ENCODE measurements at regions of chr7 and their contacts with region 1.

Region 1: DNA sequence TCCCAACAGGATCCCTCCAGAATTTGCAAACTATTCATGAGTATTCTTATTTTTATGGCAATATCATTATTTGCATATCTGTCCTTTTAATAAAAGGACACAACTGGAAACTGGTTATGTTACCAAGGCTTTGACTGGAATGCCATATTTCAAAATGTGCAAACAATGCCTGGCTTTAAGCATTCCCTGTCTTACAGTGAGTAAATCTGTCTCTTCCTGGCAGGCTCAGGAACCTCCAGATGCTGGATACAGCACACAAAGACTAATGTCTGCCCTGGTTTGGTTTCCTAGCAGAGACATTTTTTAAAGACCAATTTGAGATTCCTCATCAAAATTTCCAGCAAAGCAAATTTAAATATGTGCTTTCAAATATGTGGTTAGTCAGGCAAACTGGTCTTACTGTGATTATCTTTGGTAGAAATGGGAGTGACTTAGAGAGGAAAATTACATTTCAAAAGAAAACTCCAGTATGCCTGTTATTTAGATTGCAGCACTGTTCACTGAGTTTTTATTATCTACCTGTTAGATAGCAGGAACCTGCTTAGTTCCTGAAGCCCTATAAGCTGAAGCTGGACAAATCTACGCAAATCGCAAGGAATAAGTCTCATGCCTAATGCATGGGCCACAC is 31.3 kb downstream of the RNF216 start:
- DNase-seq: no peak
- H3K4me3 Mint-ChIP-seq: no peak overlapping the region
- H3K27ac Mint-ChIP-seq: no peak overlapping the region
- H3K4me1 Mint-ChIP-seq: no peaks in the 10 kb centered on the region
- H3K27me3 Mint-ChIP-seq: no peaks in the 10 kb centered on the region

Region 2: DNA sequence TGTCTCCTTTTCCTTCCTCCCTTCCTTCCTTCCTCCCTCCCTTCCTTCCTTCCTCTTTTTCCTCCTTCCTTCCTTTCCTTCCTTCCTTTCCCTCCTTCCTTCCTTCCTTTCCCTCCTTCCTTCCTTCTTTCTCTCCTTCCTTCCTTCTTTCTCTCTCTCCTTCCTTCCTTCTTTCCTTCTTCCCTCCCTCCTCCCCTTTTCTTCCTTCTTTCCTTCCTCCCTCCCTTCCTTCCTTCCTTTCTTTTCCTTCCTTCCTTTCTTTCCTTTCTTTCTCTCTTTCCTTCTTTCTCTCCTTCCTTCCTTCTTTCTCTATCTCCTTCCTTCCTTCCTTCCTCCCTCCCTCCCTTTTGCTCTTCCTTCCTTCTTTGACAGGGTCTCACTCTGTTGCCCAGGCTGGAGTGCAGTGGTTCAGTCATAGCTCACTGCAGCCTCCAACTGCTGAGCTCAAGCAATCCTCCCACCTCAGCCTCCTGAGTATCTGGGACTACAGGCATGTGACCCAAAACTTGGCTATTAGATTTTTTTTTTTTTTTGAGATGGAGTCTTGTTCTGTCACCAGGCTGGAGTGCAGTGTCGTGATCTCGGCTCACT is 538.2 kb after region 1 on chr7:
- CTCF ChIA-PET with region 1: no interaction called
- POLR2A ChIA-PET with region 1: interaction called, 11 read pairs
- DNase-seq: no peak
- H3K4me3 Mint-ChIP-seq: no peak overlapping the region
- H3K27ac Mint-ChIP-seq: no peak overlapping the region
- H3K4me1 Mint-ChIP-seq: no peaks in the 10 kb centered on the region
- H3K27me3 Mint-ChIP-seq: no peaks in the 10 kb centered on the region